ENCODE measurements at regions of chr12 and their contacts with region 1.

Region 1: DNA sequence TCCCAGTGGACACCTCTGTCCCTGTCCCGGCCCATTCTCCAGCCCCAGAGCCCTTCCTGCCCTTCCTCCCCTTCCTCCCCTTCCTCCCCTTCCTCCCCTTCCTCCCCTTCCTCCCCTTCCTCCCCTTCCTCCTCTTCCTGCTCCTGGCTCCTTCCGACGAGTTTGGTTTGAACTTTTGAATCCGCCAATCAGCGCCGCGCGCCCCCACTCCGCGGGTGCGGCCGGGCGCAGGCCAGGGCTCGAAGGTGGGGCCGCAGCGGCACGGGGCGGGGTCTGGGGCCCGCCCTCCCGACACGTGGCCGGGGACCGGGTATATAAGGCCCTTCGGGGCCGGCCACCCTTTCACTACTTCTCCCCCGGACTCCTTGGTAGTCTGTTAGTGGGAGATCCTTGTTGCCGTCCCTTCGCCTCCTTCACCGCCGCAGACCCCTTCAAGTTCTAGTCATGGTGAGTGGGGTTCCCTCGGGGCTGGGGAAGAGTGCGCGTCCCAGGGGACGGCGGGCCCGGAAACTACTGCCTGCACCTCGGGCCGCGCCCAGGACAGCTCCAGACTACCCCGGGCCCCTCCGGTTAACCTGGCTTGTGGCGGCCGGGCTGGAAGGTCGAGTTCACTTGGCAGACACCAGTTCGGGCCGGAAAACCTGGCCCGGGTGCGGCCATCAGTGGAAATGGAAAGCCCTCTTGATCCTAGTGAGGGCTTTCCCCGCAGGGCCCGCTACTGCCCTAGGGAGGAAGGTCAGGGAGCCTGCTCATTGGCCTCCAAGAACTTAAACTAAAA is at the start of gene TUBA1C:
- DNase-seq: peak; percentile 98

Region 2: DNA sequence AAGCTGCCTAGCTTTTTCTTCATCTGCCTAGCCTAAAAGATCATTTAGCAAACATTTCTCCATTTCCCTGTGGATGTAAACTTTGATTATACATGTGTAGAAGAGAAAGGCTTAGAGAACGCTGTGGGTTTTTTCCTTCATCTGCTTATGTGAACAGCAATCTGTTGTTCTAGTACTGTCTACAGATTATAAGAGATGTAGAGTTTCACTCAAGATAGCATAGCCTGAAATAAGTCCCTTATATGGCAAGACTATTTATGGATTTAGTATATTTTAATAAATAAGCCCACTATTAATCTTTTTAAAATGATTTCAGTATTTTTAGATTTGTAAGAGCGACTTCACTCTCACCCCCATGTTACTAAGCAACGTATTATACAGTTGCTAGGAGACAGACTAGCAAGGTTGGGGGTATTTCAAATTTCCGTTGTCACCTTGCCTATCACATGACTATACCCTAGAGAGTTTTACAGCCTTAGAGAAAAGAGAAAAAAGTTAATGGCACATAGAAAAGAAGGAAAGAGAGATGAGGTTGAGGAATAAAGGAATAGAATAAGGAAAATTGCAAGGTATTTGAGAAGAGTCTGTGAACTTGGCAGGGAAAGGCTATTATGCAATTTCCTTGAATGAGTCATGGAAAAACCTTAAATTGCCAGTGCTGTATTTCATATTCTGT is 63.9 kb before region 1 on chr12:
- CTCF ChIA-PET with region 1: no interaction called
- POLR2A ChIA-PET with region 1: no interaction called
- DNase-seq: no peak

Region 3: DNA sequence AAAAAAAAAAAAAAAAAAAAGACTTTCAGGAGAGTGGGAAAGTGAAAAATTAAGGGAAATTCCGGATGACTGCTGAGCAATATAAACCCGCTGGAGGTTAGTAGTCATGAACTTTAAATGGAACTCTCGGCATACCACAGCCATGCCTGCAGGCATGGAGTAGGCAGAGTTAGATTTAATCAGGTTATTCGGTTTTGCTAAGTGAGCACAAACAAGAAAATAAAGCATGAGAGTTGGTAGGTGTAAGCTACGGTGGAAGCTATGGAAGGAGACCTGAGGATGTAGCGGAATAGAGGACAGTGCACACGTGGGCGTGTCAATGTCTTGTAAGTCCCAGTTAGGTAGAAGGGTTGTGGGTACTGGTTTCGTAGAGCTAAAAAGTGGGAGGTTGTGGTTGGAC is 11.8 kb before region 1 on chr12:
- CTCF ChIA-PET with region 1: interaction called, 5 read pairs
- POLR2A ChIA-PET with region 1: interaction called, 14 read pairs
- DNase-seq: no peak

Region 4: DNA sequence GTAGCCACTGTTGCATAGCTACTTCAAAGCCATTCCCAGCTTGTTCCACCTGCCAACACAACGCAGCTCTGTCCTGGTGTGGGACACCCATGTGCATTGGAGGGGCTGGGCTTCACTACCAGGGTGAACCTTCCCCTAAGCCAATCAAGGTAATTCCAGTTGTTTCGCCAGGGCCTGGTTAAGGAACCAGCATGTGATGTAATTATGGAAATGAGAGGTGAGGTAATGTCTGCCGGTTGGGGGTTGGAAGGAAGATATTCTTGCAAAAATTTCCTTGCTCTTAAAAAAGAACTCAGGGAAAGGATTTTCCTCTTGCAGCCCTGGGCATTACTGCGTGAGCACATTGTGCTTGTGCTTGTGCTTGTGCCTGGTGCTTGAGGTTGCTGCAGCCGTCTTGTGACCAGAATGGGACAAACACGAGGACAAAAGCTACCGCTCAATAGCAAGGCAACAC is 14.8 kb after region 1 on chr12:
- CTCF ChIA-PET with region 1: interaction called, 5 read pairs
- POLR2A ChIA-PET with region 1: interaction called, 16 read pairs
- DNase-seq: no peak

Region 5: GRCh38 chr12:49336645-49337584 is 72.0 kb after region 1 on chr12 and contains the start of gene C1QL4:
- CTCF ChIA-PET with region 1: no interaction called
- POLR2A ChIA-PET with region 1: no interaction called
- DNase-seq: peak; percentile 90

Measured in HEK293T (cell line).